B cell (primary cell): ENCODE measurements at regions of chr4 and their contacts with region 1.

Region 1: DNA sequence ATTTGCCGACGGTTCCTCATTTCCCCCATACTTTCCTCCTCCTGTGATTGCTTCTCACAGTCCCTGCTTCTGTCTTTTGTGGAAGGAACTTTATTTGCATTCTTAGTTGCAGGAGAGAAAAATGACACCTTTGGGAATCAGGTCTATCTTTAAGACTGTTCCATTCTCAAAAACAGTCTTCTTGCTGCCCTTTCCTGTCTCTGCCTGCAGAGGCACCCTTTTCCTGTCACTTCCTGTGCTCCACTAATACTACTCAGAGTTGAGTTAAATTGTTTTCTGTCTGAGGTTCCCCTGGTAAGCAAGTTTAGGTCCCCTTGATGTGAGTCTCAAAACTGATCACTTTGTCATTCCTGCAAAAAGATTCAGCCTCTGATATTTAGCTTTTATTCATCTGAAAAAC is 208.8 kb upstream of the CLNK start:
- DNase-seq: peak; percentile 47
- ATAC-seq: peak; percentile 43
- H3K4me3 ChIP-seq: peak overlapping the region in 1 of 5 experiments; percentile 4
- H3K4me3 Mint-ChIP-seq: no peak overlapping the region
- H3K27ac ChIP-seq: no peak overlapping the region
- H3K27ac Mint-ChIP-seq: no peak overlapping the region
- H3K4me1 ChIP-seq: peaks cover 17 to 19% of the 10 kb centered on the region in 2 donors
- H3K4me1 Mint-ChIP-seq: peaks cover 17% of the 10 kb centered on the region
- H3K27me3 ChIP-seq: no peaks in the 10 kb centered on the region
- H3K27me3 Mint-ChIP-seq: no peaks in the 10 kb centered on the region
- CTCF ChIP-seq: peak; percentile 65

Region 2: DNA sequence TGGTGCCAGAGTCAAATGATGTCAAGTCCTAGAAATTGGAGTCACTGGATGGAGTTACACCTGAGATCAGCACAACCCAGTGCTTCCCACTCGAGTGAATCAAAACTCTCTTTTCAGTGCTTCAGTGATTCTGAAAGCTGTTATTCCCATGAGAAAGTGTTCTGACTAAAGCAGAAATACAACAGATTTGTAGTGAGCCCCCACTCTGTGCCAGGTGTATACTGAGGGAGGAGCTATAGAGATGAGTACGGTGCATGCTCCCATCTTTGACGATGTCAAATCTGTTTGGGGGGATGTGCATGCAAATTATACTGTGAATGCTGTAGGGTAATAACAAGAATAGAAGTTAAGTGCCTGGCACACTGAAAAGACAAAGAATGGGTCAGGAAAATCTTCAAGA is 205.1 kb after region 1 on chr4:
- CTCF ChIA-PET with region 1: no interaction called
- POLR2A ChIA-PET with region 1: no interaction called
- intact Hi-C with region 1: loop called (anchors 10 kb)
- DNase-seq: peak; percentile 75
- ATAC-seq: peak; percentile 69
- H3K4me3 ChIP-seq: peak overlapping the region in 2 of 5 experiments; percentile 3 to 28
- H3K4me3 Mint-ChIP-seq: peak overlapping the region; percentile 76
- H3K27ac ChIP-seq: peak overlapping the region; percentile 65 to 83
- H3K27ac Mint-ChIP-seq: peak overlapping the region; percentile 92
- H3K4me1 ChIP-seq: peaks cover 43 to 47% of the 10 kb centered on the region in 2 donors
- H3K4me1 Mint-ChIP-seq: peaks cover 67% of the 10 kb centered on the region
- H3K27me3 ChIP-seq: no peaks in the 10 kb centered on the region
- H3K27me3 Mint-ChIP-seq: no peaks in the 10 kb centered on the region
- CTCF ChIP-seq: no peak

Region 3: GRCh38 chr4:11424000-11424399 is 530.6 kb after region 1 on chr4:
- CTCF ChIA-PET with region 1: interaction called, 18 read pairs
- POLR2A ChIA-PET with region 1: no interaction called
- intact Hi-C with region 1: loop called (anchors 1 kb)
- DNase-seq: peak; percentile 71
- ATAC-seq: no peak
- H3K4me3 ChIP-seq: no peak overlapping the region
- H3K4me3 Mint-ChIP-seq: no peak overlapping the region
- H3K27ac ChIP-seq: no peak overlapping the region
- H3K27ac Mint-ChIP-seq: no peak overlapping the region
- H3K4me1 ChIP-seq: peaks cover 40 to 42% of the 10 kb centered on the region in 2 donors
- H3K4me1 Mint-ChIP-seq: peaks cover 73% of the 10 kb centered on the region
- H3K27me3 ChIP-seq: no peaks in the 10 kb centered on the region
- H3K27me3 Mint-ChIP-seq: no peaks in the 10 kb centered on the region
- CTCF ChIP-seq: peak; percentile 77